SK-N-SH (cell line): ENCODE measurements at regions of chr2 and their contacts with region 1.

Region 1: DNA sequence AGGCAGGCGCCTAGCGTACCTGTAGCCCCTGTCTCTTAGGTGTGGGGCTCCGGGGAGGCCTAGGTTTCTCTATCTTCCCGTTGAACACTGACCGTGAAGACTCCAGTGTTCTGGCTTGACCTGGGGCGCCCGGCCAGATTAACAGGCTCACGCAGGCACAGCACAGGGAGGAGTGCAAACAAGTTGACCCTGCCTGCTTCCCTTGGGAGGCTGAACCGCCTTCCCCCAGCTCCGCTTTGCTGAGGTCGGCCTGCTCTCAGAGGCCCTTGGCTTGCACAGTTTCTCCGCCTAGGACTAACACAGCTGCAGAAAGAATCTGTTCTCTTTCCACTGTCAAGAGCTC is 566 bp downstream of the PCYOX1 start:
- DNase-seq: peak; percentile 56
- H3K4me3 ChIP-seq: peak overlapping the region; percentile 69 to 79
- H3K27ac ChIP-seq: peak overlapping the region; percentile 7 to 84; a peak in 3 of 4 replicates
- H3K4me1 ChIP-seq: peaks cover 0 to 8% of the 10 kb centered on the region in 2 experiments; a peak in 2 of 4 replicates
- H3K27me3 ChIP-seq: no peaks in the 10 kb centered on the region
- CTCF ChIP-seq: no peak
- EP300 ChIP-seq: no peak
- RAD21 ChIP-seq: no peak

Region 2: GRCh38 chr2:69957965-69958364 is 300.5 kb before region 1 on chr2:
- CTCF ChIA-PET with region 1: no interaction called
- POLR2A ChIA-PET with region 1: no interaction called
- DNase-seq: no peak
- H3K4me3 ChIP-seq: no peak overlapping the region
- H3K27ac ChIP-seq: no peak overlapping the region
- H3K4me1 ChIP-seq: no peaks in the 10 kb centered on the region
- H3K27me3 ChIP-seq: peaks cover 12% of the 10 kb centered on the region; the same call in 1 of the 2 replicates
- CTCF ChIP-seq: no peak
- EP300 ChIP-seq: no peak
- RAD21 ChIP-seq: no peak

Region 3: GRCh38 chr2:69975500-69976462 is 282.7 kb before region 1 on chr2:
- CTCF ChIA-PET with region 1: no interaction called
- POLR2A ChIA-PET with region 1: no interaction called
- DNase-seq: no peak
- H3K4me3 ChIP-seq: no peak overlapping the region
- H3K27ac ChIP-seq: no peak overlapping the region
- H3K4me1 ChIP-seq: peaks cover 0 to 3% of the 10 kb centered on the region in 2 experiments; a peak in 1 of 4 replicates
- H3K27me3 ChIP-seq: no peaks in the 10 kb centered on the region
- CTCF ChIP-seq: no peak
- EP300 ChIP-seq: no peak
- RAD21 ChIP-seq: no peak

Region 4: GRCh38 chr2:70190418-70191243 is 67.9 kb before region 1 on chr2 and contains the start of gene C2orf42:
- CTCF ChIA-PET with region 1: no interaction called
- POLR2A ChIA-PET with region 1: interaction called, 11 read pairs
- DNase-seq: peak; percentile 94
- H3K4me3 ChIP-seq: peak within 1 kb of the TSS; percentile 79 to 93
- H3K27ac ChIP-seq: peak within 1 kb of the TSS; percentile 87 to 96
- H3K4me1 ChIP-seq: no peaks in the 10 kb centered on the region
- H3K27me3 ChIP-seq: no peaks in the 10 kb centered on the region
- CTCF ChIP-seq: peak; percentile 27; the same call in 1 of the 2 replicates
- EP300 ChIP-seq: no peak
- RAD21 ChIP-seq: no peak
- polyA plus RNA-seq, gene C2orf42: 5.1 and 6.8 TPM in 2 replicates